Left colon (tissue), 2 donors: ENCODE measurements at regions of chr9 and their contacts with region 1.

Region 1: DNA sequence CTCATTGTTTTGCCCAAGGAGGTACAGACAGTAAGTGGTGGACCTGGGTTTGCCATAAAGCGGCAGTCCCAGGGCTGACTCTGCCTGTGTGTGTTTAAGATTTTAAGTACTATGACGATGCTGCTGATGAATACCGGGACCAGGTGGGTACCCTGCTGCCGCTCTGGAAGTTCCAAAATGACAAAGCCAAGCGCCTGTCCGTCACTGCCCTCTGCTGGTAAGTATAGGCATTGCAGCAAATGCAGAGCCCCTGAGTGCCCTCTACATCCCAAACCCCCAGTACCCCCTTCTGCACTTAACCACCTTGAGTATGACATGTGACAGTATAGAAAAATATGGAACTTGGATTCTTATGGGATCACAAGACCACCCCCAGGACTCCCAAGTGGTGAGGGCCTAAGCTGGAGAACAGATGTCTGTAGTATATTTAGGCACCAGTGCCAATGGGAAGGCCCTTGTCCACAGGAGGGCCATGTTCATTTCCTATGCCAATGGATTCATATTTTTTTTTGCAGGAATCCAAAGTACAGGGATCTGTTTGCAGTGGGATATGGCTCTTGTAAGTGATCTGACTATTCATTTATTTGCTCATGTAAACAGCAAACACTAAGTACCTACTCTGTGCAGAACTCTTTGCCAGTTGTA is 22.0 kb downstream of the ENHO start:
- DNase-seq: peak in 1 of 2 donors; percentile 50
- ATAC-seq: peak; percentile 46

Region 2: DNA sequence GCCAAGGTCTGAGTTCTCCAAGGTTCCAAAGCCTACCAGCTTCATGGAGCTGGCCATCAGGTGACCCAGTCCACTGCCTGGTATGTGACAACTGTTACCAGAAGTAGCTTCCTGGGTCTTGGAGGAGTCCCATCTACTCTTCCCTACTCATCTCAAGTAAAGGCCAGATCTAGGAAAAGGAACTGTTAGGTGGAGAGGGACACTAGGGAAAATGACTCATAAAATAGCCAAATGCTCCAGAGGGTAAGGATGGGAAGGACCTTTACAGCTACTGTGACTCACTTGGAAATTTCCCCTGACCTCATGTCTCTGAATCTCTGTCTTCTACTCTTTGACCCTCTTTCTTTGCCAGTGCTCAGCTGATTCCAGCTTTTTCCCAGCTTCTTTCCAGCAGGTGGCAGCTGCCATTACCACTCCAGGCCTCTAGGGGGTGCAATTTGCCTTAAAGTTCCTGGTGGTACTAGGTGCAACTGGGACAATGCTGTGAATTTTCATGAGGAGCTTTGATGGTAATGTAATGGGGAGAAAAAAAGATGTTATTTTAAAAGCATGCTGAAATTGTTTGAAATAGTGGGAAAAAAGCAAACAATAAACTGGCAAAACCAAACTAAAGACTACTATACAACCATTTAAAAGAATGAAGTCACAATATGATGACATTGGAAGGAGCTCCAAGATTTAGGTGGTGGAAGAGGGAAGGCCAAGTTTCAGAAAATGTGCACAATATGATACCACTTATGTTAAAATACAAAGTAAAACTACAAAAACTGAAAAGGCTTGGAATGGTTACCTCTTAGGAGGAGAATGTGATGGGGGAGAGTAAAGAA is 97.0 kb before region 1 on chr9:
- intact Hi-C with region 1: loop called in 1 of 2 experiments (anchors 10 kb)
- DNase-seq: peak; percentile 42 to 69
- ATAC-seq: peak; percentile 72

Region 3: DNA sequence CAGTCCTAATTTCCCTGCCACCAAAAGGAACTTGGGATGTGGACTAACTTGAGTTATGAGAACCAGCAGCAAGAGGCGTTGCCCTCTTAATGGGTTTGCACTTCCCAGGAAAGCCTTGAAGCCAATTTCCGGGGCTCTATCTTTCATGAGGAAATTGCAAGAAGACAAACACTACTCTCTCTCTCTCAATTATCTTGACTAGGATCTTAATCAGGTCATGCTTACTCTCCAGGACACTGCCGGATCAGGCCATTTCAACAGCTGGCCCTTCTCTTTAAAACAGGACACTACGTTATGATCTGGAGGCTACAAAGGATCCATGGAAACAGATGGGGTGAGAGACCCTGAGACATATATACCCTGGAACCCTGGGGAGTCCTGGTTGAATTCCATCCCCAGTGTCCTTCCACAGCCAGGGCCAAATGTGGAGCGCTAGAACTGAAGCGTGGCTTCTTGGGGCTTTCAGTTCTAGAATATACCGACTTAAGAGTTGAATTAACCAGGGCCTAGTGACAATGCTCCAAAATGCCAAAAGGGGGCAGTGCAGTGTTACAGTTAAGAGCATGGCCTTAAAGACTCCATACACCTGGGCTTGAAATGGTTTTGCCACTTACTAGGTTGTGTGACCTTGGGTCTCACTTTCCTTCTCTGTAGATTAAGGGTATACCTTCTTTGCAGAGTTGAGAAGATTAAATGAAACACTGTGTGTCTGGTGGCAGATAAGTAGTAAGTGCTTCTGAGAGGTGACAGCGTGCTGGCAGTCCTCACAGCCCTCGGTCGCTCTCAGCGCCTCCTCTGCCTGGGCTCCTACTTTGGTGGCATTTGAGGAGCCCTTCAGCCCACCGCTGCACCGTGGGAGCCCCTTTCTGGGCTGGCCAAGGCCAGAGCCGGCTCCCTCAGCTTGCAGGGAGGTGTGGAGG is 63.5 kb before region 1 on chr9:
- intact Hi-C with region 1: loop called (anchors 2 to 10 kb)
- DNase-seq: peak in 1 of 2 donors; percentile 61
- ATAC-seq: peak; percentile 89

Region 4: GRCh38 chr9:34620061-34620994 is 119.6 kb after region 1 on chr9 and contains the start of gene DCTN3:
- intact Hi-C with region 1: no loop called
- DNase-seq: peak; percentile 94
- ATAC-seq: peak; percentile 100
- total RNA-seq, gene DCTN3: 53.7 to 59.4 TPM